Dendritic cell treated with granulocyte-macrophage colony-stimulating factor and Interleukin-4, amounts not matched to agents 40 ng/mL and 50 ng/mL, for 4 days (primary cell): ENCODE measurements at regions of chr7 and their contacts with region 1.

Region 1: GRCh38 chr7:29921404-29922010 is 68.1 kb downstream of the SCRN1 start:
- H3K4me3 Mint-ChIP-seq: no peak overlapping the region
- H3K27ac Mint-ChIP-seq: no peak overlapping the region
- H3K4me1 Mint-ChIP-seq: no peaks in the 10 kb centered on the region
- H3K27me3 Mint-ChIP-seq: no peaks in the 10 kb centered on the region

Region 2: DNA sequence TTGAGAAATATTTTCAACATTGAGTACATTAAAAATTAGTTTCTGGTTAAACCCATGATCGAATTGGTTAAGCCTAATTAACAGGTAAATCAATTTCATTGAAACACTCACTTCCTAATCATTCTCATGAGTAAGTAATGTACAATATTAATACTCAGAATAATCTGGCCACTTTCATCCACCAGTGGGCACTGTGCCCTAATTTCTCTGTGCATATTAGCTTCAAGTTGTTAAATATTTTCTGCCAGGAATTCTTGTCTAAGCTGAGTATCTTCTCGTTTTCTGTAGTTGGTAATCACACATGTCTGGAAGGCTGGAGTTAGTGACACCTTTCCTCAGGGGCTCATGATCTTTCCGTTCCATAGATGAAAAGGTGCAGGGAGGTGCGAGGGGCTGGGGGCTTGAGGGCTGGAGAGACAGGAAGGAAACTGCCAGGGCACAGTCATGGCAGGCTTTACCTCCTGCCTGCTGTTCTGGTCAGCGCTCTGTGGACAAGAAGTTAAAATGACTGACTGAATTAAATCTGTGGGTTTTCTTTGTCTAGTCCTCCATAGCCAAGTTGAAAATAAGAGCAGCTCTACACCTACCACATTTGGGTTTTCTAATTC is 43.3 kb before region 1 on chr7:
- intact Hi-C with region 1: loop called (anchors 1 kb)
- H3K4me3 Mint-ChIP-seq: no peak overlapping the region
- H3K27ac Mint-ChIP-seq: no peak overlapping the region
- H3K4me1 Mint-ChIP-seq: peaks cover under 1% of the 10 kb centered on the region
- H3K27me3 Mint-ChIP-seq: peaks cover 9% of the 10 kb centered on the region